Dorsolateral prefrontal cortex (tissue), 120 donors: ENCODE measurements at regions of chr17 and their contacts with region 1.

Region 1: DNA sequence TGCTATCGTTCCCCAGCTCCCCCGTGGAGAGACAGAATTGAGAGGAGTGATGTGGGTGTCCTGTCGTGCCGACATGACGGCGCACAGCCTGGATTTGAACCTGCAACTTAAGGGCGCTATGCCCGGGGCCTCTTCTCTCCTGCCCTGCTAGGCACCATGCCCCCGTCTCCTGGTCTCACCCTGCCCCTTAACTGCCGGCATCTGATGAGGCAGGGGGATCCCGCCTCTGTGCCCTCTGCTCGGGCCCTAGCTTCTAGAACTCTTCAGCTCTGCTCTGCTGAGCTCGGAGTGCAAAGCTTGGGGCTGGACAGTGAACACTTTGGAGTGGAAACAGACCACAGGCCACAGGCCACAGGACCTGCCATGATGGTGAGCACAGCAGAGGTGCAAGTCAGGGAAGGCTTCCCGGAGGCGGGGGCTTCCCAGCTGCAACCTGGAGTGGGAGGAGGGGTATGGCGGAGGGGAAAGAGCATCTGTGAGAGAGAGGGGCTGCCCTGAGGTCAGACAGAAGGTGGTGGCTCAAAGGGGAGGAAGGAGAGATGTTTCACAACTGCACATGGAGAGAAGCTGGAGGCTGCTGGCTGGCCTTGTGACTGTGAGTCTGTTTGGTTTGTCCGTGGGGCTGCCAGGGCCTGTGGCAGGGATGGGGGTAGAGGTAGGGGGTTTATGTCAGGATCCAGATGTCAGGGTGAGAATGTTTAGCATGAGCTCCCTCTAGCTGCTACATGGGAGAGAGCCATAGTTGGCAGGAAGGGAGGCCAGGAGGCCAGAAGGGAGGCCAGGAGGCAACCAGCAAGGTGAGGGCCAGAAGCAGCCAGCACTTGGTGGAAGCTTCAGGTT is 107.8 kb downstream of the CRLF3 start:
- DNase-seq: peak in 5 of 10 donors; percentile 8 to 39 (median 37)
- H3K4me3 ChIP-seq: no peak overlapping the region
- H3K27ac ChIP-seq: peak overlapping the region in 5 of 59 donors; percentile 8 to 65 (median 21)
- H3K27me3 ChIP-seq: no peaks in the 10 kb centered on the region
- CTCF ChIP-seq: peak in 19 of 56 donors; percentile 9 to 26 (median 17)

Region 2: GRCh38 chr17:30344283-30345088 is 372.2 kb before region 1 on chr17:
- intact Hi-C with region 1: loop called in 1 of 2 experiments (anchors 10 kb)
- DNase-seq: peak in 9 of 10 donors; percentile 26 to 80 (median 56)
- H3K4me3 ChIP-seq: peak overlapping the region in 22 of 59 donors; percentile 7 to 38 (median 16)
- H3K27ac ChIP-seq: peak overlapping the region; percentile 21 to 98 (median 92)
- H3K27me3 ChIP-seq: no peaks in the 10 kb centered on the region
- CTCF ChIP-seq: peak in 13 of 56 donors; percentile 4 to 39 (median 17)

Region 3: DNA sequence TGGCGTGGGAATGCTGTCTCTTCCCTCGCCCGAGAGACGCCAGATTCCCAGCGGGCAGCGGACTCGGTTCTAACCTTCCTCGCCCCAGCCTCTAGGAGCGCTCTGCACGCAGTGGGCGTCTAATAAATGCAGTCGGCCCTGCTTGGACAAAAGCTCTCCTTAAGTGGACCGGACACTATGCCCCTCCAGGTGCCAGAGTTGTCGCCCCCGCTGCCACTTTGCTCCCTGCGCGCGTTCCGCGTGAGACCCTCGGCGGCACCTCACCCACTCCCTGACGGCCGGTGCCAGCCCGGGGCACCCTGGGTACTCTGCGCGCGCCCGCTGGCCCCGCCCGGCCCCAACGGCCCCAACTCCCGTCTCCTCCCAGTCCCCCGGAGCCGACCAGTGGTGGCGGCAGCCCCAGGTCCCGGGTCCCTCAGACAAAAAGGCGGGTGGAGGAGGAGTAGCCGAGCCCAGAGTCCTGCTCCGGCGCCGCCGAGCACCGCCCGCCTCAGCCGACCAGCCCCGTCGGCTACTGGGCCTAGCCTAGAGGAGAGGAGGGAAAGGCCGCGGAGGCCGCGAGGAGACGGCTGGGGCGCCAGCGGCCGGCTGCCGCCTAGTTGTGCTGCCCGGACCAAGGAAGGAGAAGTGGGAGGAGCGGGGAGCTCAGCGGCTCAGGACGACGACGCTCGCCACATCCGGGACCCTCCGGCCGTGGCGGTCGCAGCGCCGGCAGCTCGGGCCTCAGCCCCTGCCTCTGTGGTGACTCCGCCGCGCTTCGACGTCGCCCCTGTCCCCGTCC is 116.4 kb before region 1 on chr17:
- intact Hi-C with region 1: loop called in 1 of 2 experiments (anchors 10 kb)
- DNase-seq: peak; percentile 52 to 86 (median 70)
- H3K4me3 ChIP-seq: peak overlapping the region; percentile 54 to 95 (median 84)
- H3K27ac ChIP-seq: peak overlapping the region; percentile 4 to 98 (median 92)
- H3K27me3 ChIP-seq: no peaks in the 10 kb centered on the region
- CTCF ChIP-seq: peak in 41 of 56 donors; percentile 5 to 53 (median 33)

Region 4: DNA sequence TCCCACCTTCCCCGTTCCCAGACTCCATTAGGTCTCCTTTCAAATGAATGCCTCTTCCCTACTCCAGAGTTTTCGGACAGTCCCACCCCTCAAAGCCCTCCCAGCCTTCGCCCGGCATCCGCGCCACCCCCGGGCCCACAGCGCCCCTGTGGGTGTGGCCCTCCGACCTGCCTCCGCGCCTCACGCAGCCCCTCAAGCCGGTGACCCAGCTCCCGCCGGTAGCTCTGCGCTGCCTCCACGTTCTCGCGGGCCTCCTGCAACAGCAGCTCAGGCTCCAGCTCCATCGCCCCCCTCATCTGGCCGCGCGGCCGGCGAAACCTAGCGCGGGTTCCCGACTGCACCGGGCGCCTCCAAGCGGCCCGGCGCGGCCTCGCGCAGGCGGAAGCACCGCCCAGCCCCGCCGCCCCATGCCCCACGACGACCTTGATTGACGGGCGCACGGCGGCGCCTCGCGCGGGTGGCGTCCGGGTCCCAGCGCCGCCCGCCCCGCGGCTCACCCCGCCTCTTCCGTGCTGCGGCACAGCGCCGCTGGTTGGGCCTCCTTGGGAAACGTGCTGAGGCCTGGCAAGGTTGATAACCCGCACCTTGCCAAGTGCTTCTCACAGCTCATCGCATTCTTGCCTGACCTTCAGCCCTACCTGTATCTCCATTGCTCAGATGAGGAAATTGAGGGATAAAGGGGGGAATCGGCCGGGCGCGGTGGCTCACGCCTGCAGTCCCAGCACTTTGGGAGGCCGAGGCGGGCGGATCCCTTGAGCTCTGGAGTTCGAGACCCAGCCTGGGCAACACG is 107.9 kb after region 1 on chr17 and contains the start of gene CRLF3:
- intact Hi-C with region 1: loop called in 1 of 2 experiments (anchors 10 kb)
- DNase-seq: peak; percentile 74 to 95 (median 87)
- H3K4me3 ChIP-seq: peak within 1 kb of the TSS; percentile 62 to 99 (median 88)
- H3K27ac ChIP-seq: peak within 1 kb of the TSS in 53 of 59 donors; percentile 26 to 93 (median 80)
- H3K27me3 ChIP-seq: no peaks in the 10 kb centered on the region
- CTCF ChIP-seq: peak; percentile 10 to 91 (median 68)
- total RNA-seq, gene CRLF3: 5.6 to 17.2 (median 11.7) TPM

Region 5: GRCh38 chr17:30921544-30922196 is 205.0 kb after region 1 on chr17 and contains the start of gene ADAP2:
- intact Hi-C with region 1: no loop called
- DNase-seq: peak in 3 of 10 donors; percentile 16 to 53 (median 53)
- H3K4me3 ChIP-seq: peak within 1 kb of the TSS; percentile 15 to 76 (median 60)
- H3K27ac ChIP-seq: peak within 1 kb of the TSS in 21 of 59 donors; percentile 8 to 62 (median 45)
- H3K27me3 ChIP-seq: peaks cover 0 to 45% (median 14%) of the 10 kb centered on the region in 45 donors
- CTCF ChIP-seq: no peak
- total RNA-seq, gene ADAP2: 2.5 to 22.4 (median 10.1) TPM

Region 6: GRCh38 chr17:30961209-30962188 is 244.8 kb after region 1 on chr17:
- intact Hi-C with region 1: no loop called
- DNase-seq: no peak
- H3K4me3 ChIP-seq: no peak overlapping the region
- H3K27ac ChIP-seq: peak overlapping the region in 2 of 59 donors; percentile 12 to 26
- H3K27me3 ChIP-seq: no peaks in the 10 kb centered on the region
- CTCF ChIP-seq: no peak